ENCODE measurements at regions of chr3 and their contacts with region 1.

Region 1: GRCh38 chr3:151282921-151283320 is 4.6 kb upstream of the P2RY14 start:
- DNase-seq: no peak
- ATAC-seq: peak; percentile 43 to 73
- H3K4me3 ChIP-seq: no peak overlapping the region
- H3K27ac ChIP-seq: no peak overlapping the region
- H3K4me1 ChIP-seq: no peaks in the 10 kb centered on the region
- H3K27me3 ChIP-seq: no peaks in the 10 kb centered on the region

Region 2: DNA sequence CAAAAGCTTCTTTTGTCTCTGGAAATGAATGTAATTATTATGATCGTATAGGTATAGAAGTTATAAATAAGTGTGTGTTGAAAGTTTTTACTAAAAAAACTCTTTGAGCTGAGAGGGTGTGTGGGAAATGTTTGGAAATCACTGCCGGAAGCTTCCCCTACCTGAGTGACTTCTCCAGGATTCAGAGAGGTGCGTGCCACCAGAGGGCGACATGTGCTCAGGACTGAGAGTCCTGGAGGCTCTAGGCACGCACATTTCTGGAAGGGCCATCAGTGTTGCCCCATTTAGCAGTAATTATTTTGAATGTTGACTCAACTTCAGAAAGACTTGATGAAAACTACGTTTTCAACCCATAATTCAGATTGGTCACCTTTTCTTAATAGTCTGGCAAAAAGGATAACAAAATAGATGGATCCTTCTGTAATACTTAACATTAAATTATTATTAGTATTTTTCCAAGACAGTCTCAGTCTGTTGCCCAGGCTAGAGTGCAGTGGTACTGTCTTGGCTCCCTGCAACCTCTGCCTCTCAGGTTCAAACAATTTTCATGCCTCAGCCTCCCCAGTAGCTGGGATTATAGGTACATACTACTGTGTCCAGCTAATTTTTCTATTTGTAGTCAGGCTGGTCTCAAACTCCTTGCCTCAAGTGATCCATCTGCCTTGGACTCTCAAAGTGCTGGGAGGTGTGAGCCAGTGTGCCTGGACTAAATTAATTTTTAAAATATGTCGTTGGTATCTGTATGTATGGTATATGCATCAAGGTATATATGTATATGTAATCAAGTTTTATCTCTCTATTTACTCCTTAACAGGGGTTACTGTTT is 114.4 kb before region 1 on chr3:
- intact Hi-C with region 1: loop called (anchors 2 to 5 kb)
- DNase-seq: peak; percentile 76 to 91 (median 91)
- ATAC-seq: peak; percentile 82 to 84
- H3K4me3 ChIP-seq: no peak overlapping the region
- H3K27ac ChIP-seq: no peak overlapping the region
- H3K4me1 ChIP-seq: no peaks in the 10 kb centered on the region
- H3K27me3 ChIP-seq: no peaks in the 10 kb centered on the region

Region 3: DNA sequence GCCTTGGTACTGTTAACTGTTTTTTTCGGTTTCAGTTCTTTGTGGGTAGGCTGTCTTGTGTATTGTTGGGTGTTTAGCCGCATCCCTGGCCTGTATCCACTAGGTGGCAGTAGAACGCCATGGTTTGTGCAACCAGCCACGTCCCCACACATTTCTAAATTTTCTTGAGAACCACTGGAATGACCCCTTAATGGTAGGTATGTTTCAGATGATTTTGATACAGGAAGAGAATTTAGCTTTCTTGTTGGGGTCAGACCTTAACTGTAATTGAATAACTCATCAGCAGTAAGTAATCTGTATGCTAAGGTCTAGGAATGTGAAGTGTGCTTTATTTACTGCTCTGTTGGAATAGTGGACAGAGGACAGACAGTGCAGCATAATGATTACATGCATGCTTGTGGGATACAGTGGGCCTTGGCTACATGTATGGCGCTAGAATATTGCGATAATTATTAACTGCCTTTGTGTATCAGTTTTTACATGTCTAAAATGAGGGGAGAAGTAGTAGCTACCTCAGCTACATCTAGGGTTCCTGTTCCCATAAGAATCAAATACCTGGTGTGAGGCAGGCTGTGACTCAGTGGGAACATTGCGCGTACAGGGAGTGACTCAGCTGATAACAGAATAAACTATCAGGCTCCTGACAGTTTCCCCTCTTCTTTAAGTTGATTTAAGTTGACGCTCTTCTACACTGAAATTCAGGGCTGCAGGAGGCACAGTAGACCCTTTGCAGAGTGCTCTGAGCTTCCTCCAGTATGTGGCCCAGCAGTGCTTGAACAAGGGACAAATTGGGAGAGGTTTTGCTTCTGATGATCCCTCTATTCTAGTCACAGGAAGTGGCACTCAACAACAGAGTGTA is 54.9 kb before region 1 on chr3:
- intact Hi-C with region 1: loop called (anchors 5 kb)
- DNase-seq: peak; percentile 66 to 82 (median 77)
- ATAC-seq: peak; percentile 90
- H3K4me3 ChIP-seq: no peak overlapping the region
- H3K27ac ChIP-seq: no peak overlapping the region
- H3K4me1 ChIP-seq: no peaks in the 10 kb centered on the region
- H3K27me3 ChIP-seq: no peaks in the 10 kb centered on the region